ENCODE measurements at regions of chr4 and their contacts with region 1.

Region 1: GRCh38 chr4:150722908-150723362 is 141.0 kb downstream of the MAB21L2 start:
- DNase-seq: peak; percentile 91
- H3K4me3 ChIP-seq: no peak overlapping the region
- H3K27ac ChIP-seq: peak overlapping the region; percentile 63
- H3K4me1 ChIP-seq: peaks cover 6% of the 10 kb centered on the region
- H3K27me3 ChIP-seq: no peaks in the 10 kb centered on the region
- CTCF ChIP-seq: peak; percentile 35

Region 2: DNA sequence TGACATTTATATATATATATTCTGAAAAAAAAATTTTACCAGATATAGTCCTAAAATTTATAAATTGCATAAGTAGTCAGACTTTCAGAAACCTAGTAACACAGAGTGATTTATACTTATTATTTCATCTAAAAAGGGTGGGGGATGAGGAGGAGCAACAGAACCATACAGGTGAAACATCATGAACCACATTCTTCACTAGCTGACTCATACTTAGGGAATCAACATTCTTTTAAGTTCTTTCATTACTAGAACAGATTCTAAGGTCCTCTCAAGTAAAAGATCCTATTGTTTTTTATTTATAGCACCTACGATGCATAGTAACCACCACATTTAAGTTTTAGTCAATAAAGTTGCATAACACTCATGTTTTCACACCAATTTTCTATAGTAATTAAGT is 126.1 kb after region 1 on chr4:
- intact Hi-C with region 1: loop called (anchors 10 kb)
- DNase-seq: no peak
- H3K4me3 ChIP-seq: no peak overlapping the region
- H3K27ac ChIP-seq: no peak overlapping the region
- H3K4me1 ChIP-seq: no peaks in the 10 kb centered on the region
- H3K27me3 ChIP-seq: no peaks in the 10 kb centered on the region
- CTCF ChIP-seq: no peak

Region 3: DNA sequence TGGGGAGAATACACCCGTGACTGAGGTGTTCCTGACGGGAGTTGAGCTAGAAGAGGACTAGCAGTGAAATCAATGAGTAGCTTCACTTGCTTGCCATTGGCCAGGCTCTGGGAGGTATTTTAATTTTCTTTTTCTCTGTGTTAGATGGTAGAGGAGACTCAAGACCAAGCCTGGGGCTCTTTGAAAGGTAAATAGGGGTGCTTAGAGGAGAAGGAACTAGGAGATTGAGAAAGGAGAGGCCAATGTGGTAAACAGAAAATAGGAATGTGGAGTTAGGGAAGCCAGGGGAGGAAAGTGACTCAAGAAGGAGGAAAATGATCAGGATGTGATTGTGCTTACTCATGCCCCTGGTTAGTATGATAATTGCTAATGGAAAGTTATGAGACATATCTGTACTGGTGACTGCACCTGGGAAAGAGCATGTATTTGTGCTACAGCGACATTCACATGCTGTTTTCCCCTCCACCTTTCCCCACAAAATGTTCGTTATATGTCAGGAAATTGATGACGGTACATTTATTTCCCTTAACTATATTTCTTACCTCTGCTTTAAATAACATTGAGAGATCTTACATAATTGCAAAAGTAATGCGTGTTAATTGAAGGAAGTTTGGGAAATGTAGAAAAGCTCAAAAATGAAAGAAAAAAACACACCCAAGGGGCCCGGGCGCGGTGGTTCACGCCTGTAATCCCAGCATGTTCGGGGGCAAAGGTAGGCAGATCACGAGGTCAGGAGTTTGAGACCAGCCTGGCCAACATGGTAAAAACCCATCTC is 309.1 kb after region 1 on chr4:
- intact Hi-C with region 1: no loop called
- DNase-seq: no peak
- H3K4me3 ChIP-seq: no peak overlapping the region
- H3K27ac ChIP-seq: no peak overlapping the region
- H3K4me1 ChIP-seq: no peaks in the 10 kb centered on the region
- H3K27me3 ChIP-seq: no peaks in the 10 kb centered on the region
- CTCF ChIP-seq: no peak

Measured in colonic mucosa (tissue), 4 donors.